Activated B cell treated with CpG ODN at 0.5 μM for 24 hours (primary cell): ENCODE measurements at regions of chr22 and their contacts with region 1.

Region 1: GRCh38 chr22:22422629-22423112 is 85.9 kb downstream of the ZNF280B start:
- DNase-seq: peak; percentile 79
- ATAC-seq: peak; percentile 99
- H3K4me3 Mint-ChIP-seq: peak overlapping the region; percentile 62
- H3K27ac Mint-ChIP-seq: peak overlapping the region; percentile 70
- H3K4me1 Mint-ChIP-seq: peaks cover 76% of the 10 kb centered on the region
- H3K27me3 Mint-ChIP-seq: no peaks in the 10 kb centered on the region
- CTCF ChIP-seq: peak; percentile 62

Region 2: DNA sequence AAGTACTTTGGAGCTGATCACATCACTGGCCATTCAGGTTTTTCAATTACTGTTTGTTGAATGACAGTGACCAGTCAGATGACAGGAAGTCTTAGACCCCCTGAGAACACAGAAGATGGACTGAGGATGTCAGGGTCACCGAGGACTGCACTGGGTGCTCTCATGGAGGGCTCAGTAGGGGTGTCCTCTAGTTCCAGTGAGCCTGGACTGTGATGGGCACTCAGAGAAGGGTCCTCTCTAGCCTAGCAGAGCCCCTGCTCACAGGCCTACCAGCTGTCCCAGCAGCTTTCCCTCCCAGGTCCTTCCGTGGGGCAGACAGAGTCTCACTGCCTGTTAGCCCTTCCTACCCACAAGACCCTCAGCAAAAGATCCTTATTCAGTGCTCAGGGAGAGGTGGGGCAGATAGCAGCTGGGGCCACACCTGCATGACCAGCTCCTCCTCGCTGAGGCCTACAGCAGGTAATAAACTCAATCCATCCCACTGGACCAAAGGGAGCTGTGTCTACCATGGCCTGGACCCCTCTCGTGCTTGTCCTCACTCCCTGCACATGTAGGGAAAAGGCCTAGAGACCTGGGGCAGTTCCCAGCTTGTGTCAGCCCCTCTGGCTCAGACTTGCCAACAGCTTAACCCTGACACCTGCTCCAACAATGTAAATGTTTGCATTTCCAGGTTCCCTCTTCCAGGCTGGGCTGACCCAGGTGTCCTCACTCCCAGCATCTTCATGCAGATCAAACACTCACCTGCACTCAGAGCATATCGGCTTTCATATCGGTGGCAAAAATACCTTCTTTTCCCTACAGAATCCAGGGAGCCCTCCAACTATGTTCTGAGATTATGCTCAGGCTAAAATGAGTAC is 203.3 kb before region 1 on chr22:
- CTCF ChIA-PET with region 1: no interaction called
- POLR2A ChIA-PET with region 1: no interaction called
- intact Hi-C with region 1: no loop called
- DNase-seq: no peak
- ATAC-seq: no peak
- H3K4me3 Mint-ChIP-seq: no peak overlapping the region
- H3K27ac Mint-ChIP-seq: no peak overlapping the region
- H3K4me1 Mint-ChIP-seq: peaks cover 42% of the 10 kb centered on the region
- H3K27me3 Mint-ChIP-seq: no peaks in the 10 kb centered on the region
- CTCF ChIP-seq: no peak

Region 3: GRCh38 chr22:22357024-22357883 is 65.4 kb before region 1 on chr22:
- CTCF ChIA-PET with region 1: interaction called, 9 read pairs
- POLR2A ChIA-PET with region 1: interaction called, 5 read pairs
- intact Hi-C with region 1: loop called (anchors 1 kb)
- DNase-seq: peak; percentile 74
- ATAC-seq: peak; percentile 87
- H3K4me3 Mint-ChIP-seq: peak overlapping the region; percentile 65
- H3K27ac Mint-ChIP-seq: peak overlapping the region; percentile 79
- H3K4me1 Mint-ChIP-seq: peaks cover 55% of the 10 kb centered on the region
- H3K27me3 Mint-ChIP-seq: no peaks in the 10 kb centered on the region
- CTCF ChIP-seq: no peak

Region 4: GRCh38 chr22:22395245-22395644 is 27.4 kb before region 1 on chr22:
- CTCF ChIA-PET with region 1: interaction called, 14 read pairs
- POLR2A ChIA-PET with region 1: interaction called, 3 read pairs
- intact Hi-C with region 1: no loop called
- DNase-seq: no peak
- ATAC-seq: peak; percentile 90
- H3K4me3 Mint-ChIP-seq: peak overlapping the region; percentile 42
- H3K27ac Mint-ChIP-seq: peak overlapping the region; percentile 86
- H3K4me1 Mint-ChIP-seq: peaks cover 48% of the 10 kb centered on the region
- H3K27me3 Mint-ChIP-seq: no peaks in the 10 kb centered on the region
- CTCF ChIP-seq: no peak

Region 5: GRCh38 chr22:22450343-22450839 is 27.7 kb after region 1 on chr22:
- CTCF ChIA-PET with region 1: interaction called, 30 read pairs
- POLR2A ChIA-PET with region 1: interaction called, 6 read pairs
- intact Hi-C with region 1: loop called (anchors 1 kb)
- DNase-seq: peak; percentile 46
- ATAC-seq: peak; percentile 97
- H3K4me3 Mint-ChIP-seq: peak overlapping the region; percentile 63
- H3K27ac Mint-ChIP-seq: peak overlapping the region; percentile 90
- H3K4me1 Mint-ChIP-seq: peaks cover 38% of the 10 kb centered on the region
- H3K27me3 Mint-ChIP-seq: no peaks in the 10 kb centered on the region
- CTCF ChIP-seq: no peak

Region 6: GRCh38 chr22:22480940-22481339 is 58.3 kb after region 1 on chr22:
- CTCF ChIA-PET with region 1: no interaction called
- POLR2A ChIA-PET with region 1: no interaction called
- intact Hi-C with region 1: no loop called
- DNase-seq: no peak
- ATAC-seq: no peak
- H3K4me3 Mint-ChIP-seq: no peak overlapping the region
- H3K27ac Mint-ChIP-seq: no peak overlapping the region
- H3K4me1 Mint-ChIP-seq: peaks cover 2% of the 10 kb centered on the region
- H3K27me3 Mint-ChIP-seq: no peaks in the 10 kb centered on the region
- CTCF ChIP-seq: no peak

Region 7: GRCh38 chr22:22508274-22509176 is 85.9 kb after region 1 on chr22 and contains the start of gene ZNF280B:
- CTCF ChIA-PET with region 1: interaction called, 7 read pairs
- POLR2A ChIA-PET with region 1: interaction called, 5 read pairs
- intact Hi-C with region 1: loop called (anchors 1 kb)
- DNase-seq: peak; percentile 78
- ATAC-seq: peak; percentile 99
- H3K4me3 Mint-ChIP-seq: peak within 1 kb of the TSS; percentile 84
- H3K27ac Mint-ChIP-seq: no peak within 1 kb of the TSS
- H3K4me1 Mint-ChIP-seq: peaks cover 10% of the 10 kb centered on the region
- H3K27me3 Mint-ChIP-seq: peaks cover 4% of the 10 kb centered on the region
- CTCF ChIP-seq: peak; percentile 26
- total RNA-seq, gene ZNF280B: 2.5 TPM in 2 replicates